Endothelial cell of umbilical vein (primary cell): ENCODE measurements at regions of chr12 and their contacts with region 1.

Region 1: DNA sequence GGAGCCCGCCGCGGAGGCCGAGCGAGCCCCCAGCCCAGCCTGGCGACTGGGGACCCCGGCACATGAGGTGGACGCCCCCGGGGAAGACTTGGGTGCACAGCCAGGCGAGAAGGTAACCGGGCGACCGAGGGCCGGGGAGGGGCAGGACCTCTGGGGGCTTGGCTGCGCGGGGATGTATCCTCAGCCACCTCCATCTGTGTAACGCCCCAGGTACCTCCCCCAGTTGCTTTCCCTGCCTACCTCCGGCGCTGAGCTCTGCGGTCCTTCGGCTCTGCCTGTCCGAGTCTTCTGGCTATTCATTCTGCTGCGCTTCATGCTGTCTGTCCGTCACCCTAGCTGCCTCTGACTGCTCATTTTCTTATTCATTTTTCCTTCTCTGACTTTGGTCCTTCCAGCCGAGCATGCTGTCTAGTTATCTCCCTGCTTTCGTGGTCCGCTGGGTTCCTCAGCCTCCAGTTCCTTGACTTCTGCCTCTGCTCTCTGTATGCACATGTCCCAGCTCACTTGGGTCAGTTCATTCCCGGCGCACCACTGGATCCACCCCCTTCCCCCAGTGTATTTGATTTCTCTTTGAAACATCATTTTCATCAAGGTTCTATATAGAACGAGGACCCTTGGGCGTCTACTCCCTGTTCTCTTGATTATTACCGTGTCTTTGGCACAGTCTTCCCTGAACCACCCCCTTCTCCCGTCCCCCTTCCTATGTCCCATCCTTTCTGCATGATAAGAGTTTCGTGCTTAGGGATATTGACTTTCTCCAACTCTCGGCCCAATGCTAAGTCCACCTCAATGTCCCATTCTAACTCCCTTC is 612 bp downstream of the PHC1 start:
- DNase-seq: peak; percentile 66
- H3K4me3 ChIP-seq: peak overlapping the region; percentile 87 to 92 (median 87)
- H3K27ac ChIP-seq: peak overlapping the region; percentile 34
- H3K4me1 ChIP-seq: peaks cover 18% of the 10 kb centered on the region
- H3K27me3 ChIP-seq: no peaks in the 10 kb centered on the region
- CTCF ChIP-seq: no peak
- POLR2A ChIP-seq: no peak

Region 2: GRCh38 chr12:8899830-8900229 is 15.1 kb before region 1 on chr12:
- CTCF ChIA-PET with region 1: no interaction called
- POLR2A ChIA-PET with region 1: no interaction called
- dilution Hi-C with region 1: no loop called
- intact Hi-C with region 1: no loop called
- DNase-seq: no peak
- H3K4me3 ChIP-seq: no peak overlapping the region
- H3K27ac ChIP-seq: no peak overlapping the region
- H3K4me1 ChIP-seq: no peaks in the 10 kb centered on the region
- H3K27me3 ChIP-seq: peaks cover 0 to 3% of the 10 kb centered on the region in 2 experiments
- CTCF ChIP-seq: no peak
- POLR2A ChIP-seq: no peak

Region 3: GRCh38 chr12:9039397-9039977 is 124.6 kb after region 1 on chr12:
- CTCF ChIA-PET with region 1: interaction called, 4 read pairs
- POLR2A ChIA-PET with region 1: no interaction called
- dilution Hi-C with region 1: no loop called
- intact Hi-C with region 1: loop called (anchors 1 kb)
- DNase-seq: peak; percentile 63
- H3K4me3 ChIP-seq: no peak overlapping the region
- H3K27ac ChIP-seq: no peak overlapping the region
- H3K4me1 ChIP-seq: no peaks in the 10 kb centered on the region
- H3K27me3 ChIP-seq: peaks cover 7 to 8% of the 10 kb centered on the region in 2 experiments
- CTCF ChIP-seq: peak; percentile 47 to 54
- POLR2A ChIP-seq: no peak